B cell (primary cell): ENCODE measurements at regions of chr17 and their contacts with region 1.

Region 1: DNA sequence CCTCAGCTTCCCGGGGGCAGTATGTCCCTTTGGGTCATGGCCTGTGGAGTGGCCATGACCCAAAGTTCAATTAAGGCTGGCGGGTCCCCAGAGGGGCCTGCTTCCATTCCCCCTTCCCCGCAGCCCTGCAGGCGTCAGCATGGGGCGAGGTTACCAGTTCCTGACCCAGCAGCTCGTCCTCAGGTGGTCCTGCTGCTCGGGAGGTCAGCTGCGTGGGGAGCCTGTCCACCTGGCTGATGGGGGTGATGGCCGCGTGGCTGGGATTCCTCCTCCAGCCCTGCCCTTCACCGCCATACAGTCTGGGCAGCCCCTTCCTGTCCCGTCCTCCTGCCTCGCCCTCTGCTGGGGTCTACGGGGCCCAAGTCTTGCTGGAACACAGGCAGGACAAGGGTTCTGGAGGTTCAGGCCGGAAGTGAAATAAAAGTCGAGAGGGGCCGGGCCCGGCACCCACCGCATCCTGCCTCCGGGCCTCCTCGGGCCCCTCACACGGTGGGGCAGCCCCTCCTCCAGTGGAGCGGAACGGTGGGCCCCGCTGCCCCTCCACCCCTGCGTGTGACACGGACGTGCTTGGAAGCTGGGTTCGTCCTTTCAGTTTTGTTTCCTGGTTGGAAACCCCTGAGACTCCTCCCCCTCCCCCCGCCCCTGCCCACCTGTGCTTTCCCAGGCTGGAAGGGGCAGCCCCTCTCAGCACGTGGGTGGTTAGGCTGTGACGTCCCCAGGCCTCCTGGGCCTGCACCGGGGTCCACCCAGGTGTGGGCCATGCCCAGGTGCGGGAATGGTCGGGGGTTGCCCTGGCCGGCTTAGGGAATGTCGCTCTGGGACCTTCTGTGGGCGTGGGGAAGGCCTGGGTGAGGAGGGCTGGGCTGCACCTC is 6.8 kb downstream of the UBALD2 start:
- DNase-seq: peak; percentile 97
- ATAC-seq: peak; percentile 55
- H3K4me3 ChIP-seq: peak overlapping the region in 4 of 5 experiments; percentile 41 to 61 (median 52)
- H3K4me3 Mint-ChIP-seq: peak overlapping the region; percentile 82
- H3K27ac ChIP-seq: peak overlapping the region; percentile 97 to 99
- H3K27ac Mint-ChIP-seq: peak overlapping the region; percentile 93
- H3K4me1 ChIP-seq: peaks cover 87 to 98% of the 10 kb centered on the region in 2 donors
- H3K4me1 Mint-ChIP-seq: peaks cover 86% of the 10 kb centered on the region
- H3K27me3 ChIP-seq: no peaks in the 10 kb centered on the region
- H3K27me3 Mint-ChIP-seq: no peaks in the 10 kb centered on the region
- CTCF ChIP-seq: no peak

Region 2: GRCh38 chr17:76141212-76142038 is 130.5 kb before region 1 on chr17 and contains the start of gene FOXJ1:
- CTCF ChIA-PET with region 1: interaction called, 5 read pairs
- POLR2A ChIA-PET with region 1: interaction called, 7 read pairs
- intact Hi-C with region 1: loop called (anchors 2 kb)
- DNase-seq: peak; percentile 95
- ATAC-seq: peak; percentile 73
- H3K4me3 ChIP-seq: peak within 1 kb of the TSS in 4 of 5 experiments; percentile 55 to 81 (median 58)
- H3K4me3 Mint-ChIP-seq: peak within 1 kb of the TSS; percentile 90
- H3K27ac ChIP-seq: no peak within 1 kb of the TSS
- H3K27ac Mint-ChIP-seq: peak within 1 kb of the TSS; percentile 75
- H3K4me1 ChIP-seq: peaks cover 54 to 63% of the 10 kb centered on the region in 2 donors
- H3K4me1 Mint-ChIP-seq: peaks cover 54% of the 10 kb centered on the region
- H3K27me3 ChIP-seq: peaks cover 0 to 43% (median 11%) of the 10 kb centered on the region in 4 experiments
- H3K27me3 Mint-ChIP-seq: peaks cover 14% of the 10 kb centered on the region
- CTCF ChIP-seq: no peak
- total RNA-seq, gene FOXJ1: 0.12 and 0.20 TPM in 2 replicates

Region 3: GRCh38 chr17:76182016-76182764 is 89.7 kb before region 1 on chr17:
- CTCF ChIA-PET with region 1: interaction called, 23 read pairs
- POLR2A ChIA-PET with region 1: interaction called, 3 read pairs
- intact Hi-C with region 1: no loop called
- DNase-seq: peak; percentile 95
- ATAC-seq: peak; percentile 96
- H3K4me3 ChIP-seq: no peak overlapping the region
- H3K4me3 Mint-ChIP-seq: peak overlapping the region; percentile 1
- H3K27ac ChIP-seq: no peak overlapping the region
- H3K27ac Mint-ChIP-seq: peak overlapping the region; percentile 74
- H3K4me1 ChIP-seq: peaks cover 10 to 11% of the 10 kb centered on the region in 2 donors
- H3K4me1 Mint-ChIP-seq: peaks cover 20% of the 10 kb centered on the region
- H3K27me3 ChIP-seq: no peaks in the 10 kb centered on the region
- H3K27me3 Mint-ChIP-seq: no peaks in the 10 kb centered on the region
- CTCF ChIP-seq: peak; percentile 89

Region 4: GRCh38 chr17:76240461-76241203 is 31.3 kb before region 1 on chr17 and contains the start of gene RNF157:
- CTCF ChIA-PET with region 1: interaction called, 6 read pairs
- POLR2A ChIA-PET with region 1: interaction called, 6 read pairs
- intact Hi-C with region 1: loop called (anchors 2 kb)
- DNase-seq: peak; percentile 66
- ATAC-seq: peak; percentile 90
- H3K4me3 ChIP-seq: peak within 1 kb of the TSS; percentile 46 to 66 (median 61)
- H3K4me3 Mint-ChIP-seq: peak within 1 kb of the TSS; percentile 88
- H3K27ac ChIP-seq: no peak within 1 kb of the TSS
- H3K27ac Mint-ChIP-seq: peak within 1 kb of the TSS; percentile 70
- H3K4me1 ChIP-seq: peaks cover 16 to 21% of the 10 kb centered on the region in 2 donors
- H3K4me1 Mint-ChIP-seq: peaks cover 11% of the 10 kb centered on the region
- H3K27me3 ChIP-seq: peaks cover 0 to 46% (median 26%) of the 10 kb centered on the region in 4 experiments
- H3K27me3 Mint-ChIP-seq: peaks cover 38% of the 10 kb centered on the region
- CTCF ChIP-seq: no peak
- total RNA-seq, gene RNF157: 1.2 and 1.4 TPM in 2 replicates